CD8-positive, alpha-beta T cell (primary cell): ENCODE measurements at regions of chr21 and their contacts with region 1.

Region 1: DNA sequence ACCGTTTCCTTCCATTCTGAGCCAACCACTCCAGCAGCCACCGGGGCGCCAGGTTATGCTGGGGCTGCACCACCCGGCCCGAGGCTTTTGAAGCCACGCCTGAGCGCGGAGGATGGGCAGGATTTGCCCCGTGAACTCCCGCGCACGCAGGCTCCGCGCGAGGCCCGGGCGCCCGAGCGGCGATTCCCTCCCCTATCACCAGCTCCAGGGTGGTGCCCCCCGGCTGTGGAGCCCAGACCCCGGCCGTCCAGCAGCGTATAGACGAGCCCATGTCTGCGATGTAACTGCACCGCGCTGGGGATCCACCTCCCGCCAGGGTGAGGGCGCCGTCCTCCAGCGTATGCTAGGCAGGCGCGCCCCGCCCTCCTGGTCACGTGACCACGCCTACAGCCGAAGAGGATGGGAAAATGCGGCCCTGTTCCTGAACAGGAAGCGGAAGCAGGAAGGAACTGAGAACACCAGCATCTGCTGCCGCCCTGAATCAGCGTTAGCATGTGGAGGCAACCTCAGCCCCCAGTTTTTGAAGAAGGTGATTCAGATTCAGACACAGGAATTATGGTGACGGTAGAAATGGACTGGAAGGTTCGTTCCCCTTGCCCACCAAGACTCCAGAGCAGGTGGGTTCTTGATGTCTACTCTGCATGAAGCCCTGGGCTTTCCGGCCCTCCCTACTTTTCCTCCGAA is 46.0 kb downstream of the VPS26C start:
- DNase-seq: peak; percentile 82 to 96 (median 95)
- ATAC-seq: peak; percentile 79
- H3K4me3 ChIP-seq: peak overlapping the region; percentile 92
- H3K4me3 Mint-ChIP-seq: peak overlapping the region; percentile 81
- H3K27ac ChIP-seq: peak overlapping the region; percentile 82
- H3K27ac Mint-ChIP-seq: peak overlapping the region; percentile 93
- H3K4me1 ChIP-seq: peaks cover 42% of the 10 kb centered on the region
- H3K4me1 Mint-ChIP-seq: peaks cover 50% of the 10 kb centered on the region
- H3K27me3 ChIP-seq: no peaks in the 10 kb centered on the region
- H3K27me3 Mint-ChIP-seq: no peaks in the 10 kb centered on the region
- CTCF ChIP-seq: peak; percentile 53

Region 2: GRCh38 chr21:37257967-37258877 is 37.1 kb after region 1 on chr21:
- CTCF ChIA-PET with region 1: no interaction called
- POLR2A ChIA-PET with region 1: interaction called, 4 read pairs
- intact Hi-C with region 1: loop called (anchors 2 kb)
- DNase-seq: peak; percentile 51 to 94 (median 78)
- ATAC-seq: peak; percentile 77
- H3K4me3 ChIP-seq: peak overlapping the region; percentile 71 to 87
- H3K4me3 Mint-ChIP-seq: peak overlapping the region; percentile 83
- H3K27ac ChIP-seq: peak overlapping the region; percentile 71 to 76
- H3K27ac Mint-ChIP-seq: peak overlapping the region; percentile 93
- H3K4me1 ChIP-seq: peaks cover 17% of the 10 kb centered on the region
- H3K4me1 Mint-ChIP-seq: peaks cover 36% of the 10 kb centered on the region
- H3K27me3 ChIP-seq: no peaks in the 10 kb centered on the region
- H3K27me3 Mint-ChIP-seq: no peaks in the 10 kb centered on the region
- CTCF ChIP-seq: no peak

Region 3: GRCh38 chr21:37267269-37268184 is 46.4 kb after region 1 on chr21 and contains the start of gene VPS26C:
- CTCF ChIA-PET with region 1: interaction called, 6 read pairs
- POLR2A ChIA-PET with region 1: interaction called, 21 read pairs
- intact Hi-C with region 1: loop called (anchors 1 kb)
- DNase-seq: peak; percentile 96 to 100 (median 98)
- ATAC-seq: peak; percentile 84
- H3K4me3 ChIP-seq: peak within 1 kb of the TSS; percentile 71 to 97
- H3K4me3 Mint-ChIP-seq: peak within 1 kb of the TSS; percentile 96
- H3K27ac ChIP-seq: peak within 1 kb of the TSS; percentile 98 to 100
- H3K27ac Mint-ChIP-seq: peak within 1 kb of the TSS; percentile 98
- H3K4me1 ChIP-seq: peaks cover 20% of the 10 kb centered on the region
- H3K4me1 Mint-ChIP-seq: peaks cover 49% of the 10 kb centered on the region
- H3K27me3 ChIP-seq: no peaks in the 10 kb centered on the region
- H3K27me3 Mint-ChIP-seq: no peaks in the 10 kb centered on the region
- CTCF ChIP-seq: no peak
- total RNA-seq, gene VPS26C: 37.4 to 39.4 TPM

Region 4: GRCh38 chr21:37435120-37435519 is 214.0 kb after region 1 on chr21:
- CTCF ChIA-PET with region 1: no interaction called
- POLR2A ChIA-PET with region 1: no interaction called
- intact Hi-C with region 1: loop called in 1 of 2 experiments (anchors 2 kb)
- DNase-seq: peak in 8 of 9 experiments; percentile 12 to 89 (median 44)
- ATAC-seq: peak; percentile 99
- H3K4me3 ChIP-seq: no peak overlapping the region
- H3K4me3 Mint-ChIP-seq: no peak overlapping the region
- H3K27ac ChIP-seq: no peak overlapping the region
- H3K27ac Mint-ChIP-seq: no peak overlapping the region
- H3K4me1 ChIP-seq: peaks cover 67% of the 10 kb centered on the region
- H3K4me1 Mint-ChIP-seq: peaks cover 42% of the 10 kb centered on the region
- H3K27me3 ChIP-seq: no peaks in the 10 kb centered on the region
- H3K27me3 Mint-ChIP-seq: no peaks in the 10 kb centered on the region
- CTCF ChIP-seq: no peak

Region 5: DNA sequence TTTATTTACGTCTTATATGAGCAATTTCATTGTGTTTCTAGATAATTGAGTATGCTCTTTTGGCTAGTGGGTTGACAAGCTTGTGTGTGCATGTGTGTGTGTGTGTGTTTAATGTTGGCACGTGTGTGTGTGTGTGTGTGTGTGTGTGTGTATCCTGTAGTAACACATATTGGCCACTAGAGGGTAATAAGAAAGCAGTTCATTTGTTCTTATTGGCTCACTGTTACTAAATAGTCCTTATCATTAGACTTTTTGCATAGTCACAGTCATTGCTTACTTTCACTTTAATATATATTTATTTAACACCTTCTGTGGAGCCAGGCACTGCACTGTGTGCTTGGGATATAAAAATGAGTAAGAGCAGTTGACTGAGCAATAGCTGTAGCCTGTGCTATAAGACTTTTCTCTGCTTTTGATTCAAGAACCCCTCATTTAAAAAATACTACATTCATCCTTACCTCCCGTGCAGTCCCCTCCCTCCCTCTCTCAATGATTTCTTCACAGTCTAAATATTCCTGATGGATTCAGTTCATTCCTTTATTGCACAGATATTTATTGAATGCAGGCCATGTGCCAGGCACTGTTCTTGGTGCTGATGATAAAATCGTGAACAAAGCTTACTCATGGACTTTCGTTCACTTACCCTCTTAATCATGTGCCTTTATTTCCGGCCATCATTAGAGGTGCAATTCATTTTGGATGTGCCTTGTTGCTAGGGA is 242.1 kb after region 1 on chr21:
- CTCF ChIA-PET with region 1: no interaction called
- POLR2A ChIA-PET with region 1: no interaction called
- intact Hi-C with region 1: loop called in 1 of 2 experiments (anchors 10 kb)
- DNase-seq: peak in 2 of 9 experiments; percentile 53 to 67
- ATAC-seq: peak; percentile 69
- H3K4me3 ChIP-seq: no peak overlapping the region
- H3K4me3 Mint-ChIP-seq: peak overlapping the region; percentile 30
- H3K27ac ChIP-seq: peak overlapping the region in 1 of 2 experiments; percentile 14
- H3K27ac Mint-ChIP-seq: peak overlapping the region; percentile 86
- H3K4me1 ChIP-seq: peaks cover 61% of the 10 kb centered on the region
- H3K4me1 Mint-ChIP-seq: peaks cover 88% of the 10 kb centered on the region
- H3K27me3 ChIP-seq: no peaks in the 10 kb centered on the region
- H3K27me3 Mint-ChIP-seq: no peaks in the 10 kb centered on the region
- CTCF ChIP-seq: peak; percentile 50

Region 6: DNA sequence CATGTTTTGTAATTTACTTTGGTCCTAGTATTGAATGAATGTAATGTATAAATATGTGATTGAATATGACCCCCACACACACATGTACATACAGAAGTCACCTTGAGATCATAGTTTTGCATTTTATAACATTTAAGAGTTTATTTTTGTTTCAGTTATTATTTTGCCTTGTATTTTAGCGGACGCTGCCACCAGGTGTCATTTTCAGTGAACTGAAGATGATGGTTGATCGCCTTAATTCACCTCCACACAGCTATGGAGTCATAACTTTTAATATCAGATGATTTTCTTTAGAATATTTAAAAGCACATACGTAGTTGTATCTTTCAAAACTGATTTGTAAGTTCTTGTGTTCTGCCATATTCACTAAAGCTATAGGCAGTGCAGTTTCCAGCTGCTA is 275.8 kb after region 1 on chr21:
- CTCF ChIA-PET with region 1: no interaction called
- POLR2A ChIA-PET with region 1: interaction called, 3 read pairs
- intact Hi-C with region 1: loop called in 1 of 2 experiments (anchors 2 kb)
- DNase-seq: peak in 2 of 9 experiments; percentile 16 to 38
- ATAC-seq: no peak
- H3K4me3 ChIP-seq: no peak overlapping the region
- H3K4me3 Mint-ChIP-seq: no peak overlapping the region
- H3K27ac ChIP-seq: no peak overlapping the region
- H3K27ac Mint-ChIP-seq: peak overlapping the region; percentile 5
- H3K4me1 ChIP-seq: no peaks in the 10 kb centered on the region
- H3K4me1 Mint-ChIP-seq: peaks cover 27% of the 10 kb centered on the region
- H3K27me3 ChIP-seq: no peaks in the 10 kb centered on the region
- H3K27me3 Mint-ChIP-seq: no peaks in the 10 kb centered on the region
- CTCF ChIP-seq: no peak

Region 7: DNA sequence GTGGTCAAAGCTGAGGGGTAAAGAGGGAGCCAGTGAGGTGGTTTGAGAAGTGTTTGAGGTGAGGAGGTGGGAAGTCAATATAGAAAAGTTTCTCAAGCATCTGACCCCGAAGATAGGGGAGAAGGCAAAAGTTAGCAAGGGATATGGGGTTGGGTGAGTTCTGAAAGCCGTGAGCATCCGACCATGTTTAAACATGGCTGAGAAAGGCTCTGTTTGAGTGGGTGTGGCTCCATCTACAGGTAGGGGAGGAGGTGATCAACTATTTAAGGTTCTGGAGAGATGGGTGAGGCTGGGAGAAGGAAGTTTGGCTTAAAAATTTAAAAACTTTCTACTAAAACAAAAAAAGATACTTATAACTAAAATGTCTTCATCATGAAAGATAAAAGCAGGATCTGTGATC is 421.4 kb after region 1 on chr21:
- CTCF ChIA-PET with region 1: no interaction called
- POLR2A ChIA-PET with region 1: no interaction called
- intact Hi-C with region 1: loop called in 1 of 2 experiments (anchors 2 kb)
- DNase-seq: peak in 6 of 9 experiments; percentile 3 to 56 (median 31)
- ATAC-seq: peak; percentile 49
- H3K4me3 ChIP-seq: no peak overlapping the region
- H3K4me3 Mint-ChIP-seq: no peak overlapping the region
- H3K27ac ChIP-seq: no peak overlapping the region
- H3K27ac Mint-ChIP-seq: no peak overlapping the region
- H3K4me1 ChIP-seq: no peaks in the 10 kb centered on the region
- H3K4me1 Mint-ChIP-seq: no peaks in the 10 kb centered on the region
- H3K27me3 ChIP-seq: no peaks in the 10 kb centered on the region
- H3K27me3 Mint-ChIP-seq: peaks cover 47% of the 10 kb centered on the region
- CTCF ChIP-seq: peak; percentile 22